ENCODE measurements at regions of chr11 and their contacts with region 1.

Region 1: DNA sequence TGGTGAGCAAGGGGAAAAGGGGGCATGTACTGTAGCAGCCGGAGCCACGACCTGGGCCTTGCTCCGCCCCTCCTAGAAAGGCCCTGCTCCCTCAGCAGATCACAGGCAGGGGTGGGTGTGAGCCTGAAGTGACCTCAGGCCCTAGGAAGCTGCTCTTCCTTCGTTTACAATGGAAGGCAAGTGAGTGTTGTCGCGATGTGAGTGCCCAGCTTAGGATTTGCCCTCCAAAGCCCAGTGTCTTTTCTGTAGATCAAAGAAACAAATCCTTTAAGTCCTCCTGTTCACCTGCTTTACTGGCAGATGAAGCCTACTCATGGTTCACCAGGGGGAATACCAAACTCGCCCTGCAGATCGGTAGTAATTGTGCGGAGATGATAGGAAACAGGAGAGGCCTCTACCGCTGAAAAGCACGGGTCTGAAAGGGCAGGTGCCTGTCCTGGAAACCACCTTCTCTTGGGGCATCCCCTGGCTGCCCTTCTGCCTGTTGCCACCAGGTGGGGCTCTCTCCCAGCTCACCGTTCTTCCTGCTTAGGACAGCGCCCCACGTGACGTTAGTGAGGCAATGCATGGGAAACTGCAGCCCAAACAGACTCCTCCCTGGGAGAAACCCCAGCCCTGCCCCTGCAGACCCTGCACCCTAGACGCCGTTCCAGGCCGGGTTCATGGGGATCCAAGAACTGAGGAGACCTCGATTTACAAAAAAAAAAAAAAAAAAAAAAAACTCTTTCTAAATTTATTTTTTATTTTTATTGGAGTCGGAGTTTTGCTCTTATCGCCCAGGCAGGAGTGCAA is 45.9 kb upstream of the RAB1B start:
- DNase-seq: peak; percentile 93
- H3K4me3 ChIP-seq: no peak overlapping the region
- H3K27ac ChIP-seq: peak overlapping the region in 3 of 4 donors; percentile 43 to 51 (median 51)
- H3K4me1 ChIP-seq: no peaks in the 10 kb centered on the region
- H3K27me3 ChIP-seq: no peaks in the 10 kb centered on the region
- CTCF ChIP-seq: peak; percentile 99 to 100 (median 99)
- EP300 ChIP-seq: no peak
- POLR2A ChIP-seq: no peak

Region 2: GRCh38 chr11:65833297-65834030 is 389.1 kb before region 1 on chr11 and contains the start of gene SNX32:
- in situ Hi-C with region 1: no loop called
- intact Hi-C with region 1: no loop called
- DNase-seq: peak; percentile 97
- H3K4me3 ChIP-seq: peak within 1 kb of the TSS; percentile 36 to 61 (median 48)
- H3K27ac ChIP-seq: peak within 1 kb of the TSS; percentile 36 to 66 (median 44)
- H3K4me1 ChIP-seq: peaks cover 6 to 16% (median 11%) of the 10 kb centered on the region in 4 donors
- H3K27me3 ChIP-seq: no peaks in the 10 kb centered on the region
- CTCF ChIP-seq: no peak
- EP300 ChIP-seq: no peak
- POLR2A ChIP-seq: no peak
- total RNA-seq, gene SNX32: 0.60 to 10.0 (median 1.6) TPM in 3 of 4 donors, not detected in the other

Region 3: DNA sequence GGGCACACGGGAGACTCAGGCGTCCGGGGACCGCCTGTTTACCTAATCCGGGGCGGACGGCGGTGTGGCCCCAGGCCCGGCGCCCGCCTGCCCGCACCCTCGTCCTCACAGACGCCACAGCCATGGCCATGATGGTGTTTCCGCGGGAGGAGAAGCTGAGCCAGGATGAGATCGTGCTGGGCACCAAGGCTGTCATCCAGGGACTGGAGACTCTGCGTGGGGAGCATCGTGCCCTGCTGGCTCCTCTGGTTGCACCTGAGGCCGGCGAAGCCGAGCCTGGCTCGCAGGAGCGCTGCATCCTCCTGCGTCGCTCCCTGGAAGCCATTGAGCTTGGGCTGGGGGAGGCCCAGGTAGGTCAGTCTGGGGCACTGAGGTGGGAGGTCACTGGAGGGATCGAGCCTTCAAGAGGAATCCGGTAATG is 35.9 kb after region 1 on chr11:
- in situ Hi-C with region 1: no loop called
- intact Hi-C with region 1: loop called (anchors 2 kb)
- DNase-seq: no peak
- H3K4me3 ChIP-seq: peak overlapping the region; percentile 67 to 89 (median 80)
- H3K27ac ChIP-seq: peak overlapping the region; percentile 77 to 92 (median 84)
- H3K4me1 ChIP-seq: peaks cover 0 to 20% (median 16%) of the 10 kb centered on the region in 4 donors
- H3K27me3 ChIP-seq: peaks cover 7% of the 10 kb centered on the region
- CTCF ChIP-seq: peak in 2 of 5 experiments; percentile 18 to 31
- EP300 ChIP-seq: no peak
- POLR2A ChIP-seq: no peak

Region 4: DNA sequence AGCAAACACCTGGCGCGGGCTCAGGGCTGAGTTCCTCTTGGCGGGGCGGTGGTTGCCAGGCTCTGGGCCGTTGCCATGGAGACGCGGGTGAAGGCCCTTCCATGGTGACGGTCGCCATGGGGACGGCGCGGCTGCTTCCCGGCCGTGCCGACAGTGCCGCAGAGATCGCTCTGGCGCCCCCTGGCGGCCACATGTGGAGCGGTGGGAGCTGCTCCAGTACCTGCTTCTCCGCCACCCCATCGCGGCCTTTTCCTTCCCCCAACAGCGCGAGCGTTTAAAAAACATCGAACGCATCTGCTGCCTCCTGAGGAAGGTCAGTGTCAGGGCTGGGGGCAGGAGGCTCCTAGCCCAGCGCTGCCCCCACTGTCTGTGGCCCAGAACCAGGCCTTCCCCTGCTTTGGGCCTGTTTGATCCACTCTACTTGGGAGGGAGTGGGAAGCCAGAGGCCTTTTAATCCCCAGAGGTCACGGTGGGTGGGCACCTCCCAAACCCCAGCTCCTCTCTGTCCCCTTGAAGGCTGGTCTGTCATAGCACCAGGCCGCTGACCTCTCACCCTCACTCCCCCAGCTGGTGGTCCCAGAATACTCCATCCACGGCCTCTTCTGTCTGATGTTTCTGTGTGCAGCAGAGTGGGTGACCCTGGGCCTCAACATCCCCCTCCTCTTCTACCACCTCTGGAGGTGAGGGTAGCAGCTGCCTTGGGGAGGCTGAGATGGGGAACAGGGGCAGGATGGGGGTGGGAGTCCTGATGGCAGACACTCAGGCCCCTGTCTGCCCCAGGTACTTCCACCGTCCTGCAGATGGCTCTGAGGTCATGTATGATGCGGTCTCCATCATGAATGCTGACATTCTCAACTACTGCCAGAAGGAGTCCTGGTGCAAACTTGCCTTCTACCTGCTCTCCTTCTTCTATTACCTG is 60.2 kb after region 1 on chr11:
- in situ Hi-C with region 1: loop called in 1 of 4 experiments (anchors 10 kb)
- intact Hi-C with region 1: loop called (anchors 10 kb)
- DNase-seq: peak; percentile 99
- H3K4me3 ChIP-seq: no peak overlapping the region
- H3K27ac ChIP-seq: no peak overlapping the region
- H3K4me1 ChIP-seq: peaks cover 14 to 26% (median 19%) of the 10 kb centered on the region in 4 donors
- H3K27me3 ChIP-seq: no peaks in the 10 kb centered on the region
- CTCF ChIP-seq: peak; percentile 97 to 99 (median 98)
- EP300 ChIP-seq: no peak
- POLR2A ChIP-seq: no peak

Region 5: DNA sequence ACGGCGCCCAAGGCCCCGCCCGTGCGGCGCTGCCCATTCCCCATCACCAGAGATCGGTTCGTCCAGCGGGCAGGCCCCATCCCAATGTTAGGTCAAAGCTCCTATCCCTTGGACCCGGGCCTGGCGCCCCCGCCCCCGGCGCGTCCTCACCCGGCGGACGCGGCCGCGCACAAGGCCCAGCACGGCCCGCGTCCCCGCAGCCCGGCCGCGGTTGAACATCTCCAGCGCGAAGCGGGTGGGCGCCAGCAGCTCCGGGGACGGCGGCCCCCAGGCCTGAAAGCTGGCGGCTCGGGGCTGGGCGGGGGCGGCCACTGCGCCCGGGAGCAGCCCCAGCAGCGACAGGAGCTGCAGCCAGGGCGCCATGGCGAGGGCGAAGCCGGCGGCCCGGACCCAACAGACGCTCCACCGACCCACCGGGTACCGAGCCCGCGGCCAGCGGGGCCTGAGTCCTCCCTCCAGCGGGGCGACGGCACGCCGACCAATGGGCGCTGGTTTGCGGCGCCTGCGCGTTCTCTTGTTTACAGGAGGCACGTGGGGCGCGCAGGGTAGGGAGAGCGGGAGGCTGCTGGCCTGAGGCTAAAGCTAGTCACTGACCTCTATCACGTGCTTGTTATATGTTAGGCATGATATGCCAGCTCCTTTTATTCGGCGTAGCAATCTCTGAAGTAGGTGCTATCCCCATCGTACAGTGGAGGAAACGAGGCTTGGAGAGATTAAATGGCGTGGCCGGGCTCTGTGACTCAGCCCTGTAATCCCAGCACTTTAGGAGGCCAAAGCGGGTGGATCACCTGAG is 345.8 kb after region 1 on chr11 and contains the start of gene CTSF:
- in situ Hi-C with region 1: no loop called
- intact Hi-C with region 1: no loop called
- DNase-seq: peak; percentile 85
- H3K4me3 ChIP-seq: peak within 1 kb of the TSS; percentile 55 to 72 (median 59)
- H3K27ac ChIP-seq: peak within 1 kb of the TSS in 3 of 4 donors; percentile 28 to 72 (median 53)
- H3K4me1 ChIP-seq: peaks cover 5 to 18% (median 13%) of the 10 kb centered on the region in 4 donors
- H3K27me3 ChIP-seq: peaks cover 17% of the 10 kb centered on the region
- CTCF ChIP-seq: no peak
- EP300 ChIP-seq: no peak
- POLR2A ChIP-seq: no peak
- total RNA-seq, gene CTSF: 23.5 to 80.6 (median 39.0) TPM

Measured in transverse colon (tissue), 4 donors.